Common myeloid progenitor, CD34-positive (primary cell): ENCODE measurements at regions of chr6 and their contacts with region 1.

Region 1: GRCh38 chr6:132813173-132813856 is 1.1 kb upstream of the RPS12 start:
- DNase-seq: peak; percentile 47 to 72 (median 66)
- H3K4me3 ChIP-seq: peak overlapping the region; percentile 75 to 100 (median 95)
- H3K27ac ChIP-seq: peak overlapping the region; percentile 64 to 95
- H3K4me1 ChIP-seq: peaks cover 17 to 39% (median 28%) of the 10 kb centered on the region in 4 experiments
- H3K27me3 ChIP-seq: no peaks in the 10 kb centered on the region

Region 2: DNA sequence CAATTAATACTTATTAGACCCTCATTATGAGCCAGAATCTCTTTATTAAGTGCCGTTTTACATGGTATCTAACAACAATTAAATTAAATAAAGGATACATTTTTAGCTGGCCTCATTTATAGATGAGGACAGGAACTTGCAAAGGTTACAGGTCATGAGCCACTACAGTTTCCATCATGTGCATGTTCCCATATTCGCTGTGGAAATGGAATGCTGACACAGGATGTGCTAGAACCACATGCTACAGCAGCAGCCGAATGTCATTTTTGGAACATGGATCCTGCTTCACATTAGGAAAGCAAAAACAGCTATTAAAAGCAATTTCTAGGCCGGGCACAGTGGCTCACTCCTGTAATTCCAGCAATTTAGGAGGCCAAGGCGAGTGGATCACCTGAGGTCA is 20.8 kb before region 1 on chr6:
- CTCF ChIA-PET with region 1: interaction called, 11 read pairs
- POLR2A ChIA-PET with region 1: interaction called, 15 read pairs
- DNase-seq: no peak
- H3K4me3 ChIP-seq: no peak overlapping the region
- H3K27ac ChIP-seq: no peak overlapping the region
- H3K4me1 ChIP-seq: peaks cover 0 to 4% (median 1%) of the 10 kb centered on the region in 4 experiments
- H3K27me3 ChIP-seq: no peaks in the 10 kb centered on the region

Region 3: DNA sequence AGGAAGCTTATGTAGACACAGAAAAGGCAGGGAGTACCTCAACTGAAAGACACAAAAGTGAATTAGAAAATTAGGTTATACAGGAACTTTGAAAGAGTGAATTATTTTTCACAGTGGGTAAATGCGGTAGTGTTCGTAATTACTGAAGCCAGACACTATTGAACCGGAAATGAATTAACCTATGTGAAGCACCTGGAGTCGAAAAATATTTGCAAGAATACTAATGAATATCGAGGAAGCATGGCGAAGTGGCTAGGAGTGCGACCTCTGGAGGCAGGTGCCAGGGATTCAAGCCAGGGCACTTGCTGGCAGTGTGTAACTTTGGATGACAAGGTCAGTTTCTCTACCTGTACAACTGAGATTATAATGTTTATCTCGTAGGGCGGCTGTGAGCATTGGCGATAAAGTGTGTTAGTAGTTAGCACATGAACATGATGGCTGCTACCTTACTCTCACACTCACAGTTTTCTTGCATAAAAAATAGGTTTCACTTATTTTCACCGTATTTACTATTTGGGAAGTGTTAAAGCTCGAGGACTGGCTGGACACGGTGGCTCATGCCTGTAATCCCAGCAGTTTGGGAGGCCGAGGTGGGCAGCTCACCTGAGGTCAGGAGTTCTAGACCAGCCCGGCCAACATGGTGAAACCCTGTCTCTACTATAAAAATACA is 14.3 kb before region 1 on chr6:
- CTCF ChIA-PET with region 1: interaction called, 30 read pairs
- POLR2A ChIA-PET with region 1: interaction called, 15 read pairs
- DNase-seq: peak; percentile 74 to 84 (median 79)
- H3K4me3 ChIP-seq: peak overlapping the region in 6 of 7 experiments; percentile 74 to 96 (median 89)
- H3K27ac ChIP-seq: no peak overlapping the region
- H3K4me1 ChIP-seq: peaks cover 0 to 11% (median 3%) of the 10 kb centered on the region in 4 experiments
- H3K27me3 ChIP-seq: no peaks in the 10 kb centered on the region